Common myeloid progenitor, CD34-positive (primary cell): ENCODE measurements at regions of chr6 and their contacts with region 1.

Region 1: DNA sequence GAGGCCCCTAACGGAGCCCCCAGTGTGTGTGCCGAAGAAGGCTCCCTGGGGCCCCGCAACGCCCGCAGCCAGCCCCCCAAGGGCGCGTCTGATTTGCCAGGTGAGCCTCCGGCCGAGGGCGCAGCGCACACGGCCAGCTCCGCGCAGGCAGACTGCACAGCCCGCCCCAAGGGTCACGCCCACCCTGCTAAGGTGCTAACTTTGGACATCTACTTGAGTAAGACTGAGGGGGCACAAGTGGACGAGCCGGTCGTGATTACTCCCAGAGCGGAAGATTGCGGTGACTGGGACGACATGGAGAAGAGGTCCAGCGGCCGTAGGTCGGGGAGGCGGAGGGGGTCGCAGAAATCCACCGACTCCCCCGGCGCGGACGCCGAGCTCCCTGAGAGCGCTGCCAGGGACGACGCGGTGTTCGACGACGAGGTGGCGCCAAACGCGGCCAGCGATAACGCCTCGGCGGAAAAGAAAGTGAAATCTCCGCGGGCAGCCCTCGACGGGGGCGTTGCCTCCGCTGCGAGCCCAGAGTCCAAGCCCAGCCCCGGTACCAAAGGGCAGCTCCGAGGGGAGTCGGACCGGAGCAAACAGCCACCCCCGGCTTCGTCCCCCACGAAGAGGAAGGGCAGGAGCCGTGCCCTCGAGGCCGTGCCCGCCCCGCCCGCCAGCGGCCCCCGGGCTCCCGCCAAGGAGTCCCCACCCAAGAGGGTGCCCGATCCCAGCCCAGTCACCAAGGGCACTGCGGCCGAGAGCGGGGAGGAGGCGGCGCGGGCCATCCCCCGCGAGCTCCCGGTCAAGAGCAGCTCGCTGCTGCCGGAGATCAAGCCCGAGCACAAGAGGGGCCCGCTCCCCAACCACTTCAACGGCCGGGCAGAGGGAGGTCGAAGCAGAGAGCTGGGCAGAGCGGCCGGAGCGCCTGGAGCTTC is 117.0 kb downstream of the RTN4IP1 start:
- DNase-seq: peak; percentile 73 to 85 (median 80)
- H3K4me3 ChIP-seq: peak overlapping the region; percentile 63 to 90 (median 82)
- H3K27ac ChIP-seq: peak overlapping the region; percentile 61 to 84
- H3K4me1 ChIP-seq: peaks cover 46 to 81% (median 65%) of the 10 kb centered on the region in 4 experiments
- H3K27me3 ChIP-seq: peaks cover 0 to 3% (median 0%) of the 10 kb centered on the region in 5 experiments

Region 2: DNA sequence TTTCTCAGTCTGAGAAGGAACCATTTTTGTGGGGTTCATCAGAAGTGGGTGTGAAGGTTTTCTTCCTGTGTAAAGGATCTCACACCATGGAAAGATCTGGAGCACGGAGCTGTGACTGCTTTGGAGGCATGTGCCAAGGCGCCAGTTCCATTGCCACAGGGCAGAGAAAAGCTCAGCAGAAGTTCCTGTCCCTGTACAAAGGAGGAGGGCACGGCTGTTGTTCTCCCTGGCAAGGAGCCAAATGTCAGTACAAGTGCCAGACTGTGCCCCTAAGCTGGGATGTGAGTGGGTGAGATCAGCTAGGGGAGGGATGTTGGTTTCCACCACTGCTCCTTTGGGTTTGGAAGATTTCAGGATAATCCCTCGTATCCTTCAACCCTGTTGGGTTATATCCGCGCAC is 34.5 kb before region 1 on chr6:
- CTCF ChIA-PET with region 1: interaction called, 12 read pairs
- POLR2A ChIA-PET with region 1: no interaction called
- DNase-seq: peak; percentile 21 to 67 (median 64)
- H3K4me3 ChIP-seq: peak overlapping the region in 1 of 7 experiments; percentile 37
- H3K27ac ChIP-seq: peak overlapping the region in 1 of 2 experiments; percentile 50
- H3K4me1 ChIP-seq: peaks cover 17 to 32% (median 24%) of the 10 kb centered on the region in 4 experiments
- H3K27me3 ChIP-seq: no peaks in the 10 kb centered on the region

Region 3: GRCh38 chr6:106501960-106502371 is 10.3 kb before region 1 on chr6:
- CTCF ChIA-PET with region 1: interaction called, 13 read pairs
- POLR2A ChIA-PET with region 1: no interaction called
- DNase-seq: no peak
- H3K4me3 ChIP-seq: no peak overlapping the region
- H3K27ac ChIP-seq: no peak overlapping the region
- H3K4me1 ChIP-seq: peaks cover 0 to 16% (median 0%) of the 10 kb centered on the region in 4 experiments
- H3K27me3 ChIP-seq: no peaks in the 10 kb centered on the region

Region 4: GRCh38 chr6:106539936-106540335 is 27.6 kb after region 1 on chr6:
- CTCF ChIA-PET with region 1: interaction called, 35 read pairs
- POLR2A ChIA-PET with region 1: interaction called, 3 read pairs
- DNase-seq: peak in 2 of 3 donors; percentile 25 to 31
- H3K4me3 ChIP-seq: no peak overlapping the region
- H3K27ac ChIP-seq: peak overlapping the region in 1 of 2 experiments; percentile 40
- H3K4me1 ChIP-seq: peaks cover 23 to 33% (median 31%) of the 10 kb centered on the region in 4 experiments
- H3K27me3 ChIP-seq: no peaks in the 10 kb centered on the region

Region 5: DNA sequence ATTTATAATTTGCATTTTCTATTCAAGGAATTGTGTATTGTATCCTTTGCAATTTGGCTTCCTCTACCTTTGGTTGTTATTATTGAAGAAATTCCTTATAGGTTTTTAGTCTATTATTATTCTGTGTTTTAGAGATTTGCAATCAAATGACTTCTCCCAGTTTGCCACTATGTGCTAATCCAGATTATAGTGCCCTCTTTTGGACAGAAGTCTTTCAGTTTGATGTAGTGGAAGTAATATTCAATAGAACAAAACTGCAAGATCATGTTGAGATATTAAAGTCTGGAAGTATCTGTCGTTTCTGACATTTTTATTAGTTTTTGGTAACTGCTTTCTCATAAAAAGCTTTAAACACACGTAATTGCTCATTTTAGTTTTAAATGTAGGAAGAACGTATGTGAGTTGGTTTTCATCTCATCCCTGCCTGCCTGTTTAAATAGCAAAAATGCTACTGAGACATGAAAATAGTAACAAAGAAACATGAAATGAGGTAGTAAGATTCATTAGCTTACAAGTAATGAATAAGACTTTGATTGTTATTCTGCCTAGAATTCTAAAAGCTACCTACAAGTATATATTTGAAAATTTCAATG is 44.2 kb after region 1 on chr6:
- CTCF ChIA-PET with region 1: interaction called, 139 read pairs
- POLR2A ChIA-PET with region 1: no interaction called
- DNase-seq: peak; percentile 52 to 67 (median 66)
- H3K4me3 ChIP-seq: no peak overlapping the region
- H3K27ac ChIP-seq: no peak overlapping the region
- H3K4me1 ChIP-seq: peaks cover under 1 to 7% (median 3%) of the 10 kb centered on the region in 4 experiments
- H3K27me3 ChIP-seq: no peaks in the 10 kb centered on the region

Region 6: GRCh38 chr6:106927531-106928398 is 415.5 kb after region 1 on chr6:
- CTCF ChIA-PET with region 1: no interaction called
- POLR2A ChIA-PET with region 1: no interaction called
- DNase-seq: peak; percentile 11 to 45 (median 33)
- H3K4me3 ChIP-seq: no peak overlapping the region
- H3K27ac ChIP-seq: no peak overlapping the region
- H3K4me1 ChIP-seq: no peaks in the 10 kb centered on the region
- H3K27me3 ChIP-seq: peaks cover 2 to 28% (median 5%) of the 10 kb centered on the region in 5 experiments